ENCODE measurements at regions of chr6 and their contacts with region 1.

Region 1: GRCh38 chr6:30717042-30717844 is at the start of gene MDC1:
- DNase-seq: peak; percentile 97
- ATAC-seq: peak; percentile 77
- H3K4me3 Mint-ChIP-seq: peak within 1 kb of the TSS; percentile 91
- H3K27ac Mint-ChIP-seq: peak within 1 kb of the TSS; percentile 100
- H3K4me1 Mint-ChIP-seq: peaks cover 41% of the 10 kb centered on the region
- H3K27me3 Mint-ChIP-seq: no peaks in the 10 kb centered on the region
- total RNA-seq, gene MDC1: 50.2 to 52.2 TPM

Region 2: GRCh38 chr6:30672445-30673253 is 44.6 kb before region 1 on chr6 and contains the start of gene DHX16:
- POLR2A ChIA-PET with region 1: interaction called, 512 read pairs
- DNase-seq: peak; percentile 89
- ATAC-seq: peak; percentile 83
- H3K4me3 Mint-ChIP-seq: peak within 1 kb of the TSS; percentile 78
- H3K27ac Mint-ChIP-seq: peak within 1 kb of the TSS; percentile 75
- H3K4me1 Mint-ChIP-seq: peaks cover 28% of the 10 kb centered on the region
- H3K27me3 Mint-ChIP-seq: no peaks in the 10 kb centered on the region
- total RNA-seq, gene DHX16: 42.9 to 44.2 TPM

Region 3: GRCh38 chr6:30686908-30687658 is 30.2 kb before region 1 on chr6:
- POLR2A ChIA-PET with region 1: interaction called, 512 read pairs
- DNase-seq: peak; percentile 83
- ATAC-seq: peak; percentile 18
- H3K4me3 Mint-ChIP-seq: peak overlapping the region; percentile 91
- H3K27ac Mint-ChIP-seq: peak overlapping the region; percentile 99
- H3K4me1 Mint-ChIP-seq: peaks cover 36% of the 10 kb centered on the region
- H3K27me3 Mint-ChIP-seq: no peaks in the 10 kb centered on the region

Region 4: DNA sequence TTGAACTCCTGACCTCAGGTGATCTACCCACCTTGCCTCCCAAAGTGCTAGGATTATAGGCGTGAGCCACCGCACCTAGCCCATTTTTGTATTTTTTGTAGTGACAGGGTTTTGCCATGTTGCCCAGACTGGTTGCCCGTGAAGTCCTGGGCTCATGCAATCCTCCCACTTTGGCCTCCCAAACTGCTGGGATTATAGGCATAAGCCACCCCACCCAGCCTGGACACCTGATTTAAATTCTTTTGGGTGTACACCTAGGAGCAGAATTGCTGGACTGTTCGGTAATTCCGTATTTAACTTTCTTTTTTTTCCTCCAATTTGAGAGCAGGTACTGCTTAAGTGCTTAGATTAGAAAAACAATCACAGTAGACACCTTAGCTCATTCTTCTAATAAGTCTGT is 20.8 kb before region 1 on chr6:
- POLR2A ChIA-PET with region 1: interaction called, 10 read pairs
- DNase-seq: no peak
- ATAC-seq: no peak
- H3K4me3 Mint-ChIP-seq: no peak overlapping the region
- H3K27ac Mint-ChIP-seq: no peak overlapping the region
- H3K4me1 Mint-ChIP-seq: no peaks in the 10 kb centered on the region
- H3K27me3 Mint-ChIP-seq: no peaks in the 10 kb centered on the region

Region 5: GRCh38 chr6:30793521-30794194 is 76.4 kb after region 1 on chr6:
- POLR2A ChIA-PET with region 1: no interaction called
- DNase-seq: no peak
- ATAC-seq: peak; percentile 87
- H3K4me3 Mint-ChIP-seq: peak overlapping the region; percentile 73
- H3K27ac Mint-ChIP-seq: peak overlapping the region; percentile 96
- H3K4me1 Mint-ChIP-seq: peaks cover 60% of the 10 kb centered on the region
- H3K27me3 Mint-ChIP-seq: no peaks in the 10 kb centered on the region